Heart left ventricle (tissue), 16 donors: ENCODE measurements at regions of chr15 and their contacts with region 1.

Region 1: DNA sequence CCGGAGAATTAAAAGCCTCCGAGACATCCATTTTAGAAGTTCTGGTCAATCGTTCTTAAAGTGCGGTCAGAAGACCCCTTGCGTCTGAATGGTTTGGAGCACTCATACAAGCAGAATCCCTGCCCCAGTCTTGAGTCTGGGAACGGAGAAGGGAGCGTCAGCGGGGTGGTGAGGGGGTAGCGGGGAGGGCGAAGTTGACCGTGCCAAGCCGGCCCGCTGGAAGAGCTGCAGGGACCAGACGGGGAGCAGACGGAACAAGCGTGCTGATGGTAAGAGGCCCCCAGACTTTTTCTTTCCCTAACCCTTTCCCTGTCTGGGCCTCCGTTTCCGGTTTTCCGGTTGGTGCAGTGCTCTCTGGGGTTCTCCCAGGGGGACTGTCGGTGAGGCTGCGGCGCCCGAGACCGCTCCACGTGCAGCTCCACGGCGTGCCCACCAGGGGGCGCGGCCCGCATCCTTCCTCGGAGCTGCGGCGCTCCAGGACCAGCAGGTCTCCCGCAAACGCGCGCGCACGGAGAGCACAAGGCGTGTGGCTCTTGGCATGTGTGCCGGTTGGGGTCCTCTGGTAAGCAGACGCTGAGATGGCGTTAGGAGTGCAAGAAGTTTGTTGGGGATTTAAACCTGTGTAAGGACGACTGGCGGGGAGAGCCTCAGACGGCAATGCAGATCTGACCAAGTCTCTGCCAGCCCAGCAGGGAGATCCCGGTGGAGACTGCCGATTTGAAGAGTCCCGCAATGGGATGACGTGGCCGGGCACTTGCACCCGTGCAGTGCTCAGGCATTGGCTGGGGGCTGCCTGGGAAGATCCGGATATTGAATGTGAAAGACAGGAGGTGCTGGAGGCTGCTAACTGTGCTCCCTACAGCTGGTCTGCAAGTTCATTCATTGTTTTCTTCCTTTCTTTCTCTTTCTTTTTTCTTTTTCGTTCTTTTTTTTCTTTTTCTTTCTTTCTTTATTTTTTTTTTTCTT is 19.2 kb upstream of the CORO2B start:
- DNase-seq: peak; percentile 78 to 92 (median 81)
- ATAC-seq: peak; percentile 81 to 95 (median 94)
- H3K4me3 ChIP-seq: peak overlapping the region in 11 of 12 donors; percentile 26 to 66 (median 52)
- H3K27ac ChIP-seq: peak overlapping the region in 2 of 12 donors; percentile 15 to 17
- H3K4me1 ChIP-seq: peaks cover 0 to 19% (median 9%) of the 10 kb centered on the region in 12 donors
- H3K27me3 ChIP-seq: peaks cover 0 to 10% (median 0%) of the 10 kb centered on the region in 9 donors
- CTCF ChIP-seq: peak; percentile 93 to 99 (median 97)
- POLR2A ChIP-seq: no peak

Region 2: GRCh38 chr15:68252925-68253534 is 306.6 kb before region 1 on chr15:
- intact Hi-C with region 1: loop called in 4 of 10 experiments (anchors 5 to 10 kb)
- DNase-seq: no peak
- ATAC-seq: peak in 3 of 4 donors; percentile 29 to 45 (median 40)
- H3K4me3 ChIP-seq: no peak overlapping the region
- H3K27ac ChIP-seq: peak overlapping the region in 1 of 12 donors; percentile 2
- H3K4me1 ChIP-seq: peaks cover 0 to 19% (median 5%) of the 10 kb centered on the region in 12 donors
- H3K27me3 ChIP-seq: no peaks in the 10 kb centered on the region
- CTCF ChIP-seq: peak; percentile 80 to 93 (median 87)
- POLR2A ChIP-seq: no peak

Region 3: GRCh38 chr15:68492855-68493254 is 66.8 kb before region 1 on chr15:
- intact Hi-C with region 1: no loop called
- DNase-seq: peak in 3 of 5 donors; percentile 20 to 83 (median 21)
- ATAC-seq: peak; percentile 23 to 86 (median 80)
- H3K4me3 ChIP-seq: no peak overlapping the region
- H3K27ac ChIP-seq: peak overlapping the region in 4 of 12 donors; percentile 8 to 41 (median 20)
- H3K4me1 ChIP-seq: peaks cover 0 to 20% (median 4%) of the 10 kb centered on the region in 12 donors
- H3K27me3 ChIP-seq: peaks cover 0 to 4% (median 0%) of the 10 kb centered on the region in 9 donors
- CTCF ChIP-seq: no peak
- POLR2A ChIP-seq: no peak

Region 4: GRCh38 chr15:68650901-68651709 is 91.5 kb after region 1 on chr15:
- intact Hi-C with region 1: loop called in 1 of 10 experiments (anchors 5 kb)
- DNase-seq: peak in 3 of 5 donors; percentile 52 to 80 (median 53)
- ATAC-seq: peak in 3 of 4 donors; percentile 47 to 52 (median 50)
- H3K4me3 ChIP-seq: no peak overlapping the region
- H3K27ac ChIP-seq: peak overlapping the region in 1 of 12 donors; percentile 68
- H3K4me1 ChIP-seq: peaks cover 0 to 19% (median 1%) of the 10 kb centered on the region in 12 donors
- H3K27me3 ChIP-seq: no peaks in the 10 kb centered on the region
- CTCF ChIP-seq: peak; percentile 39 to 80 (median 66)
- POLR2A ChIP-seq: no peak

Region 5: DNA sequence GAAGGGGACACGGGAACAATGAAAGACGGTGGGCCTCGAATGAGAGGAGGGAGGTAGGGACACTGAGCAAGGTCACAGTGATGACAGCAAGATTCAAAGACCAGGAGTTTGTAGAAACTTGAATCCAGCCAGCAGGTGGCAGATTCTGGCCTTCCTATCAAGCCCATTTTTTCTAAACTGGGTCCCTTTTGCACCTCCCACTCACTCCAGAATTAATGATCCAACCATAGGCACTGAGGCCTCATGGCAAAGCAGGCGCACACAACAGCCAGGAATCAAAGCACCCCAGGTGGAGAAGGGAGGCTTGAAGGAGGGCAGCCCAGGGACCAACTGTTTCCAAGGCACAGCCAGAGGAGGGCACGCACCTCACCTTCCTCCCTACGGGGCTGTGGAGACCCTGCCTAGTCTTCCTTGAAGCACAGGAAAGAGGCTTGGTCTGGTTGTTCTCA is 170.9 kb after region 1 on chr15:
- intact Hi-C with region 1: loop called in 2 of 10 experiments (anchors 10 kb)
- DNase-seq: peak in 4 of 5 donors; percentile 43 to 62 (median 58)
- ATAC-seq: peak; percentile 32 to 59 (median 46)
- H3K4me3 ChIP-seq: peak overlapping the region in 1 of 12 donors; percentile 3
- H3K27ac ChIP-seq: peak overlapping the region; percentile 19 to 86 (median 72)
- H3K4me1 ChIP-seq: peaks cover 3 to 79% (median 49%) of the 10 kb centered on the region in 12 donors
- H3K27me3 ChIP-seq: no peaks in the 10 kb centered on the region
- CTCF ChIP-seq: peak; percentile 13 to 76 (median 58)
- POLR2A ChIP-seq: no peak

Region 6: DNA sequence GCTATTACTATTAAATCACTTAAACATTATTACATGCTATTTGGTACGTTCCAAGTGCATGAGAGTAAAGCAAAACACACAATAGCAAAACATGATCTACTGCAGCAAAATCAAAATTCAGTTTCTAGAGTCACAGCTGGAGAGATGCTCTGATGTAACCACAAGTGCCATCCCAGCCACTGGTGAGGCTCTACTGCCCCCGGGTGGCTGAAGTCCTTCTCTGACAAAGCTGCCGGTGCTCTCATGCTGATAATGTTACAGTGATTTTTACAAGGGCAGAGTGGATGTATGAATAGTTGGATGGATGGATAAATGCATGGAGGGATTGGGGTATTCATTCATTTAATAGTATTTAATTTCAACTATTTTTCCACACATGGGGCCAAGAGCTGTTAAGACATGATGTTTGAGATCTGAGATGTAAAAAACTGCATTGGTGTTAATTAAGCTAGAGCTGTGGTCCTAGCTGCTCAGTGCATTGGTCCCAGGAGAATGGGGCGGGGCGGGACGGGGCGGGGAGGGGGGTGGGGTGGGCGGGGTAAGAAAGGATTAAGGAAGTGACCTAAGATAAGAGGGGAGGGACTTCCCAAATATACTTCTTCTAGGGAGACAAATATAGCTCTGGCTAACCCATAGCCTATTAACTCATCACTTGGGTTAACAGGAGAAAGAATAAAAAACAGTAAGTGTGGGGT is 365.4 kb after region 1 on chr15:
- intact Hi-C with region 1: loop called in 7 of 10 experiments (anchors 5 to 10 kb)
- DNase-seq: peak; percentile 58 to 81 (median 71)
- ATAC-seq: peak in 3 of 4 donors; percentile 86 to 91 (median 88)
- H3K4me3 ChIP-seq: no peak overlapping the region
- H3K27ac ChIP-seq: no peak overlapping the region
- H3K4me1 ChIP-seq: peaks cover 0 to under 1% (median 0%) of the 10 kb centered on the region in 12 donors
- H3K27me3 ChIP-seq: peaks cover 0 to 5% (median 0%) of the 10 kb centered on the region in 9 donors
- CTCF ChIP-seq: peak; percentile 62 to 92 (median 76)
- POLR2A ChIP-seq: no peak